PC-3 (cell line): ENCODE measurements at regions of chr7 and their contacts with region 1.

Region 1: GRCh38 chr7:43572516-43573049 is 10.3 kb upstream of the STK17A start:
- DNase-seq: peak; percentile 97
- ATAC-seq: peak; percentile 89
- H3K4me3 ChIP-seq: no peak overlapping the region
- H3K27ac ChIP-seq: peak overlapping the region; percentile 82
- H3K4me1 ChIP-seq: peaks cover 48% of the 10 kb centered on the region
- H3K27me3 ChIP-seq: no peaks in the 10 kb centered on the region
- CTCF ChIP-seq: no peak

Region 2: GRCh38 chr7:43244232-43244631 is 328.4 kb before region 1 on chr7:
- CTCF ChIA-PET with region 1: no interaction called
- POLR2A ChIA-PET with region 1: no interaction called
- intact Hi-C with region 1: no loop called
- DNase-seq: peak; percentile 41
- ATAC-seq: no peak
- H3K4me3 ChIP-seq: no peak overlapping the region
- H3K27ac ChIP-seq: no peak overlapping the region
- H3K4me1 ChIP-seq: peaks cover 4% of the 10 kb centered on the region; the same call in 1 of the 2 replicates
- H3K27me3 ChIP-seq: no peaks in the 10 kb centered on the region
- CTCF ChIP-seq: no peak

Region 3: DNA sequence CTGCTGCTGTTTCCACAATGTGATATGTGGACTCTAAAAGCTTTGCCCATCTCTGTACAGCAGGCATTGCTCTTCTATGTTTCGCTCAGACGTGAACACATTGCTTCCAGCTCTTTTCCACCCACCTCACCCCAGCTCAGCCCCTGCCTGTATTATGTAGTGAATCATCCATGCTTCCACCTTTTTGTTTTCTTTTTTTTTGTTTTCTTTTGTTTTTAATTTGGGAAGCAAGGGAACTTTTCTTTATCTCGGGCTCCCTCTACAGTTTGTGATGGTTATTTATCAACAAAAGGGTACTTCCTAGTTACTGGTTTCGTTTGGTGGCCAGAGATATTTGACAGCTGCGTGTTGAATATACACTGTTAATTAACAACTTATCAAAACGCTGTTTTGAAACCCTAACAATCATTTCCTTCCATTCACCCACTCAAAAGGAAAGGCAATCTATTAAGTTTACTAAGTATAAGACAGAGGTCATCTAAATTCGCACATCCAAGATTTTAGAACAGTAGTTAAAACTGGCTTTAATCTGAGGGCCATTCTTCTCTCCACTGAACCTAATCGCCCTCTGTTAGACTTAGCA is 117.6 kb before region 1 on chr7:
- CTCF ChIA-PET with region 1: no interaction called
- POLR2A ChIA-PET with region 1: no interaction called
- intact Hi-C with region 1: loop called (anchors 10 kb)
- DNase-seq: peak; percentile 66
- ATAC-seq: peak; percentile 67
- H3K4me3 ChIP-seq: peak overlapping the region; percentile 26; the same call in 1 of the 2 replicates
- H3K27ac ChIP-seq: no peak overlapping the region
- H3K4me1 ChIP-seq: no peaks in the 10 kb centered on the region
- H3K27me3 ChIP-seq: no peaks in the 10 kb centered on the region
- CTCF ChIP-seq: peak; percentile 81

Region 4: DNA sequence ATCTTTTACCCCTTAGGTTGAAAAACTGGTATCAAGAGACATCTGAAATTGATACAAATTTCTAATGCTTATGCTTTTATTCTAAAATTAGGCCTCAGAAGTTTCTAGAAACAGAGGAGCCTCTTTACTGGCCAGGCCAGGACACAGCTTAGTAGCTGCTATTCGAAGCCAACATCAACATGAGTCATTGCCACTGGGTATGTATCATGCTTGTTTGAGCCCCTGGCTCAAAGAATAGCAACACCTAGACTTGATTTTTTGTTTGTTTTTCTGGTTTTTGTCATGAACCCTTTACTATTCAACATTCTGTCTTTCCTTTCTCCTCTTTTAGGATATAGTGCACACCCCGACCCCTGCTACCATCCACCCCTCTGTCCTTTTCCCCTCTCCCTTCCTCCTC is 80.6 kb before region 1 on chr7:
- CTCF ChIA-PET with region 1: no interaction called
- POLR2A ChIA-PET with region 1: no interaction called
- intact Hi-C with region 1: loop called (anchors 10 kb)
- DNase-seq: peak; percentile 81
- ATAC-seq: peak; percentile 100
- H3K4me3 ChIP-seq: no peak overlapping the region
- H3K27ac ChIP-seq: no peak overlapping the region
- H3K4me1 ChIP-seq: peaks cover 8% of the 10 kb centered on the region
- H3K27me3 ChIP-seq: no peaks in the 10 kb centered on the region
- CTCF ChIP-seq: no peak

Region 5: DNA sequence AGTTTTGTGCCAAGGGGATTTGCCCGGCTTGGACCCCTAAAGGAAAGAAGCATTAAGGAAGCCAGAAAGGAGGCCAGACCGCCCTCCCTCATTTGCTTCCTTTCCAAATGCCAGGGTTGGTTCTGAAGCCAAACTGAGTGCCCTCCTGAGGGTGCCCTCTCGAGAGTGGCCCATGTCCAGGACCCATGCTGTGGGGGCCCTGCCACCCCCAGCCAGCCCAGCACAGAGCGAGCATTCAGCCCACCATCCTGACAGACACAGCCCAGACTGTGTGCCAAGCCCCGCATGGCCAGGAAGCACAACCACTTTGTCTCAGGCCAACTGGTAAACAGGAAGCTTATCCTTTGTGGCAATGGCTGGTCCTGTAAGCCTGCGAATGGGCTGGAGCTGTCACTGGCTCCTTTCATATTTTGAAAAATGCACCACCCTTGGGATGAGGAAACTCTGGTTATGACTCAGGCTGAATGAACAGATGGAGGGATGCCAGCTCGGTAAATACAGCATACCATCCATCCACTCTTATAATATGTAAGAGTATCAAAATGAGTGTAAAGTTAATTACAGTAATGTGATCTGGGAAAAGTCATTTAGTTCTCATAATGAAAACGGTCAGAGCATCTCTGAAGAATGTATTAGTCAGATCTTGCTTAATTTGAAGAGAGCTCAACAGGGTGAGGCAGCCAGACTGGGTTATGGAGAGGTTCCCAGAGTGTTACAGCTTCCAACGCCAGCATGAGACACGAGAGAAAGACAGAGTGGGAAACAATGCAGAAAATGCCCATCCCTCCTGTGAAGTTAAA is 75.3 kb after region 1 on chr7:
- CTCF ChIA-PET with region 1: no interaction called
- POLR2A ChIA-PET with region 1: no interaction called
- intact Hi-C with region 1: no loop called
- DNase-seq: peak; percentile 98
- ATAC-seq: peak; percentile 64
- H3K4me3 ChIP-seq: peak overlapping the region; percentile 33; the same call in 1 of the 2 replicates
- H3K27ac ChIP-seq: peak overlapping the region; percentile 99
- H3K4me1 ChIP-seq: peaks cover 73% of the 10 kb centered on the region
- H3K27me3 ChIP-seq: no peaks in the 10 kb centered on the region
- CTCF ChIP-seq: no peak